ENCODE measurements at regions of chr2 and their contacts with region 1.

Region 1: DNA sequence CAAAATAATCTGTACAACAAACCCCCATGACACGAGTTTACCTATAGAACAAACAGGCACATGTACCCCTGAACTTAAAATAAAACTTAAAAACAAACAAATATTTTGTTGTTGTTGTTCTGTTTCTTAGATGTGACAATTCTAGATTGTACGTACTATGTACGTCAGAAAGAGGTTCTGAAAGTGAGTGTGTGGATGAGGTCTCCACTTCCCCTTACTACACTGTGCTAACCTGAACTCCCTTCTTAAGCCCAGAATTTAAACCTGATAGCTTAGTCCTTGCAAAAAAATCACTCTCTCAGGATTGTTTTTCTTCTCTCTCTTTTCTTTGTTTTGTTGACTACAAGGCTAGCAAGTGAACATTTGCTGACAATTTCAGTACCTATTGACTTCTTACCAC is 581.6 kb downstream of the LRRTM4 start:
- DNase-seq: no peak

Region 2: DNA sequence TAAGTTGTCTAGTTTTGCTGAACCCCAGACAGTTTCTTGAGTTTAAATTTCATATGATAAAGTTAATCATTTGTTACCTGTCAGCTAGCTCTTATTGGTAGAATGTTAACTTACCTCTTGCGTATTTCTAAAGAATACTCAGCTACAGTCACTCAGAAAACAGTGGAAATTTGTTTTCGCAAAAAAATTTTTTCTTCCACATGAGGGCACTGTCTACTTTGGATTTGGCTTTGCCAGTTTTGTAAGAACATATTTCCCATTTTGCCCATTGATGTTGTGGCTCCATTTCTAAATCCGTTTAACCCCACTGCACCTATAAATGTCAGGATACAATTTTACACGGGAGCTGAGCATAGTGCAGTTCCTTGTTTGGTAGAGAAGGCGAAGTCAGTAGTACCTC is 1210.7 kb before region 1 on chr2:
- intact Hi-C with region 1: loop called in 1 of 2 experiments (anchors 5 kb)
- DNase-seq: no peak